ENCODE measurements at regions of chr3 and their contacts with region 1.

Region 1: DNA sequence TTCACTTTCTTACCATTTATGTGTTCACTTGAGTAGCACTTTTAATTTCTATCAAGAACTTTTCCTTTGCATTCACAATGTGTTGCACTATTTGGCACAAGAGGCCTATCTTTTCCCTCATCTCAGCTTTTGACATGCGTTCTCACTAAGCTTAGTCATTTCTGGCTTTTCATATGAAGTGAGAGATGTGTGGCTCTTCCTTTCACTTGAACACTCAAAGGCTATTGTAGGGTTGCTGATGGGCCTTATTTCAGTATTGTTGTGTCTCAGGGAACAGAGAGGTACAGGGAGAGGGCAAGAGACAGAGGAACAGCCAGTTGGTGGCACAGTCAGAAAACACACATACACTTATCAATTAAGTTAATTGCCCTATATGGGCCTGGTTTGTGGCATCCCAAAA is 127.4 kb upstream of the MLF1 start:
- DNase-seq: no peak
- ATAC-seq: no peak
- H3K4me3 ChIP-seq: no peak overlapping the region
- H3K27ac ChIP-seq: no peak overlapping the region
- H3K4me1 ChIP-seq: no peaks in the 10 kb centered on the region
- H3K27me3 ChIP-seq: no peaks in the 10 kb centered on the region
- CTCF ChIP-seq: no peak
- POLR2A ChIP-seq: no peak
- RAD21 ChIP-seq: no peak

Region 2: DNA sequence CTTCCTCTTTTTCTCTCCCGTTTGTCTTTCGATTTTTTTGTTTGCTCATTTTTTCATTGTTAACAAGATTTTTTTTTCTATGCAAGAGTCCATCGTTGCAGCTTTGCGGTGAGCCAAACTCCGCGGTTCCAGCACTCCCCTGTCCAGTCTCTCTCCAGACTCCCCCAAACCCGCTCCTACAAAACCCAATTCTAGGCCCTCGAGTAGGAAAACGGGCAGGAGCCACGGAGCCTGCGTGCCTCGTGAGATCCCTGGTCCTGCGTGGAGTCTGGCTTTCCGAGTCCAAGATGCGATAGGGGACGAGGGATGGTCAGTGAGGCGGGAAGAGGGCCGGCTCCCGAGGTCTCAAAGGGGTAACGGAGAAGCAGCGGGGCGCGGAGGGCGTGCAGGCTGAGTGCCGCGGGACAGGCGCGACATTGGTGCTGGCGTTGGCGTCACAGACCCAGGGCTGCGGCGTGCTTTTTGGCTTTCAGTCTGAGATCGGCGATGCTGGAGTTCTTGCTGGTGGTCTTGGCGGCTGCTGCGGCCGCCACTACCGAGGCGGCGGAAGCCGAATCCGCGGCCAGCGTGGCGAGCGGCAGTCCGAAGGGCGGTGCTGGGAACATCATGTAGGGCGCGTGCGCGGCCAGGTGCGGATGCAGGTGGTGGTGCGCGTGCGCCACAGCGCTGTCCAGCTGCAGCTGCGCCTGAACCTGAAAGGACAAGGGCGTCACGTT is 345.9 kb before region 1 on chr3:
- CTCF ChIA-PET with region 1: no interaction called
- POLR2A ChIA-PET with region 1: no interaction called
- dilution Hi-C with region 1: no loop called
- in situ Hi-C with region 1: loop called (anchors 10 kb)
- intact Hi-C with region 1: no loop called
- DNase-seq: peak; percentile 57
- ATAC-seq: peak; percentile 71
- H3K4me3 ChIP-seq: peak overlapping the region; percentile 56
- H3K27ac ChIP-seq: no peak overlapping the region
- H3K4me1 ChIP-seq: peaks cover 2% of the 10 kb centered on the region; the same call in 1 of the 2 replicates
- H3K27me3 ChIP-seq: peaks cover 64% of the 10 kb centered on the region
- CTCF ChIP-seq: no peak
- POLR2A ChIP-seq: no peak
- RAD21 ChIP-seq: no peak